Activated naive CD4-positive, alpha-beta T cell treated with anti-CD3 and anti-CD28 coated beads for 36 hours (primary cell): ENCODE measurements at regions of chr2 and their contacts with region 1.

Region 1: GRCh38 chr2:170873035-170873692 is 55.9 kb upstream of the GORASP2 start:
- DNase-seq: peak; percentile 87
- H3K4me3 Mint-ChIP-seq: peak overlapping the region; percentile 53
- H3K27ac Mint-ChIP-seq: no peak overlapping the region
- H3K4me1 Mint-ChIP-seq: peaks cover 12% of the 10 kb centered on the region
- H3K27me3 Mint-ChIP-seq: no peaks in the 10 kb centered on the region

Region 2: GRCh38 chr2:170324640-170325046 is 548.5 kb before region 1 on chr2:
- CTCF ChIA-PET with region 1: interaction called, 3 read pairs
- intact Hi-C with region 1: loop called (anchors 5 kb)
- DNase-seq: peak; percentile 53
- H3K4me3 Mint-ChIP-seq: no peak overlapping the region
- H3K27ac Mint-ChIP-seq: no peak overlapping the region
- H3K4me1 Mint-ChIP-seq: no peaks in the 10 kb centered on the region
- H3K27me3 Mint-ChIP-seq: no peaks in the 10 kb centered on the region

Region 3: DNA sequence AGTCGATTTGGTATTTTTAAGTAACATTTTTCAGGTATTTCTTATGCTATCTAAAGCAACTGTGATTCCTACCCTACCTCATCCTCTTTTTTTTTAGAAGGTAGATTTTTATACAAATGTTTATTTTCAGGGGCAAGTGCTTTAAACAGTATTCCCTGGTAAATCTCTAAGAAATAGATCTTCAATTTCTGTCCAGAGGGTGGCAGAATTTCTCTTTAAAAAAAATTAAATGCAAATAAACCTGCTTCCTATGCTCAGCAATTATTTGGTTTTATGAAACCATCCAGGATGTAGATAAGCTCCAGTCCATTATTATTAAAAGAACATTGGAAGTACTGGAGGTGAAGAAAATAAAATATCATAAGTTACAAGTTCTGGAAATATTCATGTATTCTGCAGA is 503.3 kb before region 1 on chr2:
- CTCF ChIA-PET with region 1: interaction called, 6 read pairs
- intact Hi-C with region 1: loop called (anchors 1 kb)
- DNase-seq: no peak
- H3K4me3 Mint-ChIP-seq: no peak overlapping the region
- H3K27ac Mint-ChIP-seq: no peak overlapping the region
- H3K4me1 Mint-ChIP-seq: peaks cover 29% of the 10 kb centered on the region
- H3K27me3 Mint-ChIP-seq: peaks cover 25% of the 10 kb centered on the region

Region 4: DNA sequence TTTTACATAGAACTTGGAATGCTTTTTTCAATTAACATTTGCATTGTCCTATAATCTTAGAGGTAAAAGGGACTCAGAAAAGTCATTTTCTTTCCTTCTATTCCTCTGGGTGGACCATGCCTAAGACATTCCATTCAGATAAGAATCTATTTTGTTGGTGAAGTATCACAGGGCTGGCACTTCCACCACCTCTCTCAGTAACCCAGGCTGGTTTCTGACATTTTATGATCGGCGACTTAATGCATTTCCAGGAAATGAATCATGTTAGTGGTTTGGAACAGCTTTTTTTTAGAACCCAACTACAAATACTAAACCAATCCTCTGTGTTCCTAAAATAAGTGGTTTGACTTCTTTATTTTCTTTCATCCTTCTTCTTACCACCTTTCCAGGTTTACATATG is 29.5 kb before region 1 on chr2:
- CTCF ChIA-PET with region 1: interaction called, 24 read pairs
- intact Hi-C with region 1: loop called (anchors 2 kb)
- DNase-seq: peak; percentile 44
- H3K4me3 Mint-ChIP-seq: no peak overlapping the region
- H3K27ac Mint-ChIP-seq: no peak overlapping the region
- H3K4me1 Mint-ChIP-seq: peaks cover 12% of the 10 kb centered on the region
- H3K27me3 Mint-ChIP-seq: peaks cover 3% of the 10 kb centered on the region

Region 5: GRCh38 chr2:170862286-170862902 is 10.8 kb before region 1 on chr2:
- CTCF ChIA-PET with region 1: interaction called, 11 read pairs
- intact Hi-C with region 1: no loop called
- DNase-seq: no peak
- H3K4me3 Mint-ChIP-seq: no peak overlapping the region
- H3K27ac Mint-ChIP-seq: no peak overlapping the region
- H3K4me1 Mint-ChIP-seq: no peaks in the 10 kb centered on the region
- H3K27me3 Mint-ChIP-seq: no peaks in the 10 kb centered on the region